Mammary epithelial cell (primary cell): ENCODE measurements at regions of chr5 and their contacts with region 1.

Region 1: GRCh38 chr5:145811834-145812625 is 23.1 kb downstream of the PRELID2 start:
- DNase-seq: peak; percentile 31
- H3K4me3 ChIP-seq: no peak overlapping the region
- H3K27ac ChIP-seq: no peak overlapping the region
- H3K4me1 ChIP-seq: no peaks in the 10 kb centered on the region
- H3K27me3 ChIP-seq: no peaks in the 10 kb centered on the region
- CTCF ChIP-seq: peak in 1 of 2 donors; percentile 52

Region 2: DNA sequence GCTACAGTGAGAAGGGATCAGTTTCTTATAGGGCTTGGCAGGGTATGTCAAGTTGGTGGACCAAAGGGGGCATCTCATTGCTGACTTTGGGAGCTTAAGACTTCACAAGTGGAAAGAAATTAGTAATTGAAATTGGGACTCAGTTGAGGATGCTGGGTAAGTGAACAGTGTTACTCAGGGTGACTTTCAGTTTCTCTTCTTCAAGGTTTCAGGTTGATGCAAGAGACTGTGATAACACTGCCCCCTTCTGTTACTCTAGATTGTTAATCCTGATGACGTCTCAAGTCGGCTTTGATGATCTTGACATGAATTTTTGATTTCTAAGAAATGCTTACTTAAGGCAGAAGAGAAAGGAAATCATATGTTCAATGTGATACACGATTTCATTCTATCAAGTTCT is 1620.0 kb before region 1 on chr5:
- CTCF ChIA-PET with region 1: no interaction called
- dilution Hi-C with region 1: no loop called
- in situ Hi-C with region 1: loop called in 1 of 2 experiments (anchors 25 kb)
- intact Hi-C with region 1: no loop called
- DNase-seq: peak; percentile 75
- H3K4me3 ChIP-seq: peak overlapping the region in 1 of 3 experiments; percentile 23
- H3K27ac ChIP-seq: no peak overlapping the region
- H3K4me1 ChIP-seq: peaks cover 17% of the 10 kb centered on the region
- H3K27me3 ChIP-seq: peaks cover 3% of the 10 kb centered on the region
- CTCF ChIP-seq: peak; percentile 40 to 44

Region 3: DNA sequence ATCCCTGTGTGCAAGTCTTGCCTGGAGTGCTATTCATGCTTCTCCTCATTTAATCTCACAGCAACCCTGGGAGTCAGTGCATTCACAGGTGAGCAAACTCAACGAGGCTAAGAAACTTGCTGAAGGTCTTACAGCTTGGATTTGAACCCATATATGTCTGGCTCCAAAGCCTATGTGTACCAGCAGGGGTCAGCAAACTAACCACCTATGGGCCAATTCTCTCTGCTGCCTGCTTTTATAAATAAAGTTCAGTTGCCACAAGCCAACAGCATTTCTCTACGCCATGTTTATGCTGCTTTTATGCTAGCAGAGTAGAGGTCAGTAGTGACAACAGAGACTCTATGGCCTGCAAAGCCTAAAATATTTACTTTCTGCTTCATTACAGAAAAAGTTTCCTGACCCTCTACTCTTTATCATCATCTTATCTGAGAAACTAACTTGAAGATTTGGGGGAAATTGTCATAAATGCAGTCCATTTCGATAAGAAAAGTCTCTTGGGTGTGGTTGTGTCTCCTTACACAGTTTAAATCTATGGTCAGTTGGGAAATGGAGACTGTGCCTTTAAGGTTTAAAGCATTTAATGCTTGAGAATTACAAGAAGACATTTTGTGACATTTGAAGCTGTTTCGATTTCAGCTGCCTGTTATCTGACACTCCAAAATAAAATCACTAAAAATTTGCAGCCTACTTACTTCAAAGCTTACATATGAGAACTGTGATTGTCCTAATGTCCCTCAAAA is 114.6 kb before region 1 on chr5:
- CTCF ChIA-PET with region 1: interaction called, 7 read pairs
- dilution Hi-C with region 1: no loop called
- in situ Hi-C with region 1: no loop called
- intact Hi-C with region 1: loop called (anchors 1 kb)
- DNase-seq: peak; percentile 19
- H3K4me3 ChIP-seq: no peak overlapping the region
- H3K27ac ChIP-seq: no peak overlapping the region
- H3K4me1 ChIP-seq: no peaks in the 10 kb centered on the region
- H3K27me3 ChIP-seq: no peaks in the 10 kb centered on the region
- CTCF ChIP-seq: peak; percentile 63 to 65

Region 4: GRCh38 chr5:145787001-145787400 is 25.0 kb before region 1 on chr5:
- CTCF ChIA-PET with region 1: interaction called, 10 read pairs
- dilution Hi-C with region 1: no loop called
- in situ Hi-C with region 1: no loop called
- intact Hi-C with region 1: no loop called
- DNase-seq: no peak
- H3K4me3 ChIP-seq: no peak overlapping the region
- H3K27ac ChIP-seq: no peak overlapping the region
- H3K4me1 ChIP-seq: peaks cover 6% of the 10 kb centered on the region
- H3K27me3 ChIP-seq: no peaks in the 10 kb centered on the region
- CTCF ChIP-seq: no peak

Region 5: DNA sequence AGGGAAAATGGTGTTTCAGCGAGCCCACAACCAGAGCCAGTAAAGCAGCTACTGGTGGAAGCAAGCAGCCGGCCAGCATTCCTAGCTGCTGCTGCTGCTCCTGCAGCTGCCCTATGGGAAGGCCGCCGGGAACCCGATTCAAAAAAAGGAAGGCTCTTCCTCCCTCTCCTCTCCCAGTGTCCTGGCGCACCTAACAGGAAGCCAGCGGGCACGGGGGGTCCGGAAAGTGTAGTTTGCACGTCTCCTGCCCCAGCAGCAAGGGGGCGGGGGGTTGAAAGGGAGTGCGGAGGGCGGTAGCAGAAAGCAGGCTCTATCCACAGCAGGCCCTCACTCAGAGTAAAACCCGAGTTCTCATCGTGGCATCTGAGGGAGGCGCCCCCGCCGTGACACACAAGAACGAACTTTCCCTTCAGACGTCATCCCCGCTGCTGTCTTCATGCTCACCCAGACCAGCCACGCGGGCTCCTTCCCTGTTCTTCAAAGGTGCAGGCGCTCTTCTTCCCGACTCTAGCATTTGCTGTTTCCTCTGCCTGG is 44.3 kb after region 1 on chr5:
- CTCF ChIA-PET with region 1: no interaction called
- dilution Hi-C with region 1: no loop called
- in situ Hi-C with region 1: no loop called
- intact Hi-C with region 1: no loop called
- DNase-seq: peak; percentile 17
- H3K4me3 ChIP-seq: peak overlapping the region in 1 of 3 experiments; percentile 25
- H3K27ac ChIP-seq: peak overlapping the region; percentile 38
- H3K4me1 ChIP-seq: peaks cover 24% of the 10 kb centered on the region
- H3K27me3 ChIP-seq: no peaks in the 10 kb centered on the region
- CTCF ChIP-seq: no peak